Ovary (tissue), 10 donors: ENCODE measurements at regions of chr6 and their contacts with region 1.

Region 1: DNA sequence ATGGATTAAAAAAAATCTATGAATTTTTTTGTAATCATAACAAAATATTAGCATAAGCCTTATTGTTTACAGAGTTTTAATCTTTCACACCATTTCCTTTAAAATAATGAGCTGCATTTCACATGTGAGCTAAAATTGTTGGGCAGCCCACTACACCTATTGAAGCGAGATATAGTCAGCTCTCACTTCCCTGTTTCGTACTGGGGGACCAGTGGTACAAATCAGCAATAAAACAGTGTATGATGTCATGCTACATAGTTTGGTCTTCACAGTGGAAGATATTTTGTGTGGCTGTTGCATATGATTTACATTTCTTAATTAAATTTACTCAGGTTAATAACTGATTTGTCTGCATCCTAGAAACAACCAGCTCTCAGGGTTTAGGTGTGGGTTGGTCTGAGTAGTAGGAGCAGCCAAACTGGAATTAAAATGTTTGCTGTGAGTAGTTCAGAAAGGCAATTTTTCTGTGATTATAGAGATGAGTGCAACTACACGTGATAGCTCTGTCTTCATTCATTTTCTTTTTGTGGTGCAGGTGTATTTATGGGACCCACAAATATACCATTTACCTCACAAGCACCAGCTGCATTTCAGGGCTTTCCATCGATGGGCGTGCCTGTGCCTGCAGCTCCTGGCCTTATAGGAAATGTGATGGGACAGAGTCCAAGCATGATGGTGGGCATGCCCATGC is 99.3 kb downstream of the B3GAT2 start:
- DNase-seq: no peak
- H3K4me3 ChIP-seq: no peak overlapping the region
- H3K27ac ChIP-seq: no peak overlapping the region
- H3K4me1 ChIP-seq: no peaks in the 10 kb centered on the region
- H3K27me3 ChIP-seq: no peaks in the 10 kb centered on the region
- CTCF ChIP-seq: no peak
- EP300 ChIP-seq: no peak
- POLR2A ChIP-seq: no peak

Region 2: GRCh38 chr6:70586114-70586513 is 271.4 kb before region 1 on chr6:
- intact Hi-C with region 1: no loop called
- DNase-seq: no peak
- H3K4me3 ChIP-seq: no peak overlapping the region
- H3K27ac ChIP-seq: no peak overlapping the region
- H3K4me1 ChIP-seq: no peaks in the 10 kb centered on the region
- H3K27me3 ChIP-seq: no peaks in the 10 kb centered on the region
- CTCF ChIP-seq: no peak
- EP300 ChIP-seq: no peak
- POLR2A ChIP-seq: no peak

Region 3: GRCh38 chr6:70842541-70842940 is 15.0 kb before region 1 on chr6:
- intact Hi-C with region 1: loop called in 1 of 4 experiments (anchors 1 kb)
- DNase-seq: no peak
- H3K4me3 ChIP-seq: no peak overlapping the region
- H3K27ac ChIP-seq: no peak overlapping the region
- H3K4me1 ChIP-seq: peaks cover 2% of the 10 kb centered on the region
- H3K27me3 ChIP-seq: no peaks in the 10 kb centered on the region
- CTCF ChIP-seq: no peak
- EP300 ChIP-seq: no peak
- POLR2A ChIP-seq: no peak

Region 4: DNA sequence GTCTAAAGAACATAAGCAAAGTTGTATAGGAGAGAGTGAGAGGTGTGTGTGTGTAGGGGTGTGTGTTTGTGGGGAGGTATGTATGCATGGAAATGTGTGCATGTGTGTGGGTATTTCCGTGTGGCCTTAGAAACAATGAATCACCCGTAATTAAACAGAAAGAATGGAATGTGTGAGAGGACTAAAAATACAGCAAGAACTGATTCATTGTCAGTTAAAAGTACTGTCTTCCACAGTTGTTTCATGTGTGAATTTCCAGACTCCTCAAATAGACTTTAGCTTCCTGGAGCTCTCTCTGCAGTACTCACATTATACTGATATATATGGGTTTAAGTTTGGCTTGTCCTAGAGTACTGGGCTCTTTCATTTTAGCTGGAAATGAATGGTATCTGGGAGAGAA is 1174.6 kb after region 1 on chr6:
- intact Hi-C with region 1: no loop called
- DNase-seq: no peak
- H3K4me3 ChIP-seq: no peak overlapping the region
- H3K27ac ChIP-seq: no peak overlapping the region
- H3K4me1 ChIP-seq: no peaks in the 10 kb centered on the region
- H3K27me3 ChIP-seq: no peaks in the 10 kb centered on the region
- CTCF ChIP-seq: no peak
- EP300 ChIP-seq: no peak
- POLR2A ChIP-seq: no peak